ENCODE measurements at regions of chr11 and their contacts with region 1.

Region 1: DNA sequence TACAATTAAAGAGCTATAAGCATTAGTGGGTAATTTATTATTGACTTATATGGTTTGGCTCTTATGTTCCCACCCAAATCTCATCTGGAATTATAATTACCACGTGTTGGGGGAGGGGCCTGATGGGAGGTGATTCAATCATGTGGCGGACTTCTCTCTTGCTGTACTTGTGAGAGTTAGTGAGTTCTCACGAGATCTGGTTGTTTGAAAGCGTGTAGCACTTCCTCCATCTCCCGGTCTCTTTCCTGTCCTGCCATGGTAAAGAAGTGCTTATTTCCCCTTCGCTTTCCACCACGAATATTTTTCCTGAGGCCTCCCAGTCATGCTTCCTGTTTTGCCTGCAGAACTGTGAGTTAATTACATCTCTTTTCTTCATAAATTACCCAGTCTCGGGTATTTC is 28.1 kb upstream of the CHORDC1 start:
- DNase-seq: no peak
- H3K4me3 Mint-ChIP-seq: no peak overlapping the region
- H3K27ac Mint-ChIP-seq: no peak overlapping the region
- H3K4me1 Mint-ChIP-seq: no peaks in the 10 kb centered on the region
- H3K27me3 Mint-ChIP-seq: peaks cover 10% of the 10 kb centered on the region
- CTCF ChIP-seq: no peak

Region 2: DNA sequence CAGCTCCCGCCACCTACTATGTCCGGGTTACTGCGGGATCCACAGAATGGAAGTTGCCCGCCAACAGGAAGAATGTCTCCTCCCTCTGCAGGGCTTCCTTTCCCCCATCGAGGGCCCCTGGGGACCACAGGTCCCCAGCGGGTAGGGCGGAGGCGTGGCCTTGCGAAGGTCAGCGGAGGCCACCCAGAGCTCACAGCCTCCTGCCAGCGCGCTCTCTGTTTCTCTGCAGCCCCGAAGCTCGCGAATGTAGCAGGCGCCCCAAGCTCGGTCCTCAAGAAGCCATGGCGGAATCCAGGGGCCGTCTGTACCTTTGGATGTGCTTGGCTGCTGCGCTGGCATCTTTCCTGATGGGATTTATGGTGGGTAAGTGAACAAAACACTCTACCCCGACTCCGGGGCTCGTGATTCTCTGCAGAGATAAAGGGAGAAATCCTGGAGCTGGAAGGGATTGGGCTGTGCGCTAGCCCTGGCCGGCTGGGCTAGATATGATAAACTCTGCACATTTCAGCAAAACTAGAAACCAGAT is 116.4 kb before region 1 on chr11 and contains the start of gene NAALAD2:
- CTCF ChIA-PET with region 1: no interaction called
- POLR2A ChIA-PET with region 1: no interaction called
- intact Hi-C with region 1: no loop called
- DNase-seq: no peak
- H3K4me3 Mint-ChIP-seq: no peak within 1 kb of the TSS
- H3K27ac Mint-ChIP-seq: no peak within 1 kb of the TSS
- H3K4me1 Mint-ChIP-seq: no peaks in the 10 kb centered on the region
- H3K27me3 Mint-ChIP-seq: peaks cover 92% of the 10 kb centered on the region
- CTCF ChIP-seq: no peak
- total RNA-seq, gene NAALAD2: not detected in 2 replicates

Region 3: GRCh38 chr11:90171359-90171758 is 79.6 kb before region 1 on chr11:
- CTCF ChIA-PET with region 1: no interaction called
- POLR2A ChIA-PET with region 1: no interaction called
- intact Hi-C with region 1: no loop called
- DNase-seq: no peak
- H3K4me3 Mint-ChIP-seq: no peak overlapping the region
- H3K27ac Mint-ChIP-seq: no peak overlapping the region
- H3K4me1 Mint-ChIP-seq: no peaks in the 10 kb centered on the region
- H3K27me3 Mint-ChIP-seq: peaks cover 54% of the 10 kb centered on the region
- CTCF ChIP-seq: no peak

Region 4: GRCh38 chr11:90453525-90453924 is 202.6 kb after region 1 on chr11:
- CTCF ChIA-PET with region 1: interaction called, 3 read pairs
- POLR2A ChIA-PET with region 1: no interaction called
- intact Hi-C with region 1: loop called (anchors 2 kb)
- DNase-seq: no peak
- H3K4me3 Mint-ChIP-seq: no peak overlapping the region
- H3K27ac Mint-ChIP-seq: no peak overlapping the region
- H3K4me1 Mint-ChIP-seq: peaks cover 12% of the 10 kb centered on the region
- H3K27me3 Mint-ChIP-seq: no peaks in the 10 kb centered on the region
- CTCF ChIP-seq: no peak

Measured in MCF 10A (cell line).